Gastrocnemius medialis (tissue), 4 donors: ENCODE measurements at regions of chr11 and their contacts with region 1.

Region 1: GRCh38 chr11:122101625-122102291 is 14.3 kb downstream of the BLID start:
- DNase-seq: peak; percentile 65 to 73
- ATAC-seq: peak; percentile 78 to 86
- H3K4me3 ChIP-seq: peak overlapping the region; percentile 59 to 65 (median 60)
- H3K27ac ChIP-seq: peak overlapping the region; percentile 86 to 92 (median 88)
- H3K4me1 ChIP-seq: peaks cover 6 to 9% of the 10 kb centered on the region in 2 donors
- H3K27me3 ChIP-seq: no peaks in the 10 kb centered on the region
- CTCF ChIP-seq: peak; percentile 46 to 76 (median 62)
- POLR2A ChIP-seq: peak; percentile 22 to 23

Region 2: DNA sequence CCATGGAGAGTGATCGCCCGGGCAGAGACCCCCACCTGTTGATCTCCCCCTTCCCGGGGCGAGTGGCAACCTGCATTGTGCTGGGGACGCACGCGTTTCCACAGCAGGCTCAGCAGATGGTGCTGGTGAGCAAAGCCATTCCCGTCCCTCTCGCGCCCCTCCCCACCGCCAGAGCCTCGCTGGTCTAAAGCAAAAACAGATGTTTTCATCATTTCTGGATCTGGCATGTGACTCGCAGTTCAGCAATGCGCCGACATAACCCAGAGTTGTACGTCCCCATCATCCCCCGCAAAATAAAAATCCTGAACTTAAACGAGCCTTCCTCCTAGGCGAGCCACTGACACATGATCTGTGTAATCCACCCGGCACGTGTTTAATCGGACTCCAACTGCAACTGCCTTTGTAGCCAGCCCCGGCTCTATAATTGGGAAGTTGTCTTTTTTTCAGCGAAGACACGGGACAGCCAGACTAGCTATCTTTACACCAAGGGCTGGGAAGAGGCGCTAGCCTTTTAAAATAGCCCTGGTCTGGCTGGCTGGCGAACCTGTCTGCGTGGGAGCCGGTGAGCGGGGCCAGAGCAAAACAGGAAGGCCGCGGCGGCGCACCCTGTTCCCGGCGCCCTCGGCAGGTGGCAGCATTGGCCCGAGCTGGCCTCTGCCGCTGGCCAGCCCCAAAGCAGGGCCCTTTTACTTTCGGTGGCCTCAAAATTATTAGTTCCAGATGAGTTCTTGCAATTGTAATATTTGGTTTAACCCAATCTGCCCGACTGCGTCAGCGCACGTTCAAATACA is 446.0 kb before region 1 on chr11:
- in situ Hi-C with region 1: loop called in 3 of 4 experiments (anchors 10 to 25 kb)
- intact Hi-C with region 1: loop called (anchors 1 kb)
- DNase-seq: peak; percentile 75 to 80
- ATAC-seq: peak; percentile 89 to 94
- H3K4me3 ChIP-seq: peak overlapping the region; percentile 46 to 71 (median 52)
- H3K27ac ChIP-seq: peak overlapping the region; percentile 86 to 87 (median 86)
- H3K4me1 ChIP-seq: peaks cover 7 to 11% of the 10 kb centered on the region in 2 donors
- H3K27me3 ChIP-seq: no peaks in the 10 kb centered on the region
- CTCF ChIP-seq: peak; percentile 84 to 91 (median 87)
- POLR2A ChIP-seq: no peak

Region 3: GRCh38 chr11:122007601-122008071 is 94.1 kb before region 1 on chr11:
- in situ Hi-C with region 1: no loop called
- intact Hi-C with region 1: no loop called
- DNase-seq: peak; percentile 26 to 49
- ATAC-seq: no peak
- H3K4me3 ChIP-seq: no peak overlapping the region
- H3K27ac ChIP-seq: no peak overlapping the region
- H3K4me1 ChIP-seq: no peaks in the 10 kb centered on the region
- H3K27me3 ChIP-seq: no peaks in the 10 kb centered on the region
- CTCF ChIP-seq: no peak
- POLR2A ChIP-seq: no peak

Region 4: DNA sequence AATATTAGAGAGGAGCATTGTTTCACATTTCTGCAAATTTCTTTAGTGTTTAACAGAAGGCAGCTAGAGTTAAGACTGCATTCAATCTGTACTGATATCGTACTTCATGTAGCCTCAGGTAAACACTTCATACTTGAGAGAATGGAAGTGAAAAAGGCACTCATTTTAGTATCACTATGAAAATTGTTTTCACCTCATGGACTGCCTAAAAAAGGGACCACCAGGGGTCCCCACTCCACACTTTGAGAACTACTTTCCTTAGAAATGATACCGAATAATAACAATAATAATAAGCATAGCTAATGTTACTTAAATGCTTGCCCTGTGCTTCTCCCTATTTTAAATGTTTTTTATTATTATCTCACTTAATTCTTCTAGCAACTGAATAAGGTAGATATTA is 80.9 kb before region 1 on chr11:
- in situ Hi-C with region 1: no loop called
- intact Hi-C with region 1: loop called (anchors 2 kb)
- DNase-seq: no peak
- ATAC-seq: no peak
- H3K4me3 ChIP-seq: no peak overlapping the region
- H3K27ac ChIP-seq: no peak overlapping the region
- H3K4me1 ChIP-seq: no peaks in the 10 kb centered on the region
- H3K27me3 ChIP-seq: no peaks in the 10 kb centered on the region
- CTCF ChIP-seq: peak in 3 of 5 experiments; percentile 10 to 46 (median 26)
- POLR2A ChIP-seq: no peak

Region 5: GRCh38 chr11:122170815-122171475 is 69.2 kb after region 1 on chr11:
- in situ Hi-C with region 1: no loop called
- intact Hi-C with region 1: no loop called
- DNase-seq: no peak
- ATAC-seq: no peak
- H3K4me3 ChIP-seq: no peak overlapping the region
- H3K27ac ChIP-seq: no peak overlapping the region
- H3K4me1 ChIP-seq: peaks cover 0 to 3% of the 10 kb centered on the region in 2 donors
- H3K27me3 ChIP-seq: no peaks in the 10 kb centered on the region
- CTCF ChIP-seq: no peak
- POLR2A ChIP-seq: no peak

Region 6: DNA sequence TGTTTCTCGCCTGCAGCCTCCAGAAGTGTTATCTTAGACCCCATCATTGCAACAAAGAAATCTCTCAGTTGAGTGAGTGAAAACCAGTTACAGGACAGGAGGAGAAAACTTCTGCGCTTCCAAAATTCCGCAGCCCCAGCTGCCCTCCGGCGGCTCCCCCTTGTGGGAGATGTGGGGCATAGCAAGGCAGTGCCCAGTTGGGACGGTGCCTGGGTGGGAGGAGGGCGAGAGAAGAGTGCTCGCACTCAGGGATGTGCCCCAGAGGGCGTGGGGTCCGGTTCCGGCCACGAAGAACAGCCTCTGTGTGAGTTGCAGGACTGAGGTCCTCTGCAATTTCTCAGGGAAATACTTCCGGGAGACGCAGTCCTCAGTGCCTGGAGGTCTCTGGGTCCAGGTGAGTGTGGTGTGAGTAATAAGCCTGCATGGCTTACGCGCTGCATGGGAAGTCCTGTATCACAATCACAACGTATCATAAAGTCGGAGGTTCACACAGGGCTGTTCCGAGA is 101.2 kb after region 1 on chr11:
- in situ Hi-C with region 1: loop called in 2 of 4 experiments (anchors 10 kb)
- intact Hi-C with region 1: loop called (anchors 2 kb)
- DNase-seq: peak; percentile 41 to 63
- ATAC-seq: peak; percentile 87 to 90
- H3K4me3 ChIP-seq: peak overlapping the region; percentile 17 to 35 (median 28)
- H3K27ac ChIP-seq: peak overlapping the region in 1 of 4 donors; percentile 22
- H3K4me1 ChIP-seq: peaks cover 10 to 21% of the 10 kb centered on the region in 2 donors
- H3K27me3 ChIP-seq: no peaks in the 10 kb centered on the region
- CTCF ChIP-seq: peak; percentile 88 to 97 (median 93)
- POLR2A ChIP-seq: no peak

Region 7: DNA sequence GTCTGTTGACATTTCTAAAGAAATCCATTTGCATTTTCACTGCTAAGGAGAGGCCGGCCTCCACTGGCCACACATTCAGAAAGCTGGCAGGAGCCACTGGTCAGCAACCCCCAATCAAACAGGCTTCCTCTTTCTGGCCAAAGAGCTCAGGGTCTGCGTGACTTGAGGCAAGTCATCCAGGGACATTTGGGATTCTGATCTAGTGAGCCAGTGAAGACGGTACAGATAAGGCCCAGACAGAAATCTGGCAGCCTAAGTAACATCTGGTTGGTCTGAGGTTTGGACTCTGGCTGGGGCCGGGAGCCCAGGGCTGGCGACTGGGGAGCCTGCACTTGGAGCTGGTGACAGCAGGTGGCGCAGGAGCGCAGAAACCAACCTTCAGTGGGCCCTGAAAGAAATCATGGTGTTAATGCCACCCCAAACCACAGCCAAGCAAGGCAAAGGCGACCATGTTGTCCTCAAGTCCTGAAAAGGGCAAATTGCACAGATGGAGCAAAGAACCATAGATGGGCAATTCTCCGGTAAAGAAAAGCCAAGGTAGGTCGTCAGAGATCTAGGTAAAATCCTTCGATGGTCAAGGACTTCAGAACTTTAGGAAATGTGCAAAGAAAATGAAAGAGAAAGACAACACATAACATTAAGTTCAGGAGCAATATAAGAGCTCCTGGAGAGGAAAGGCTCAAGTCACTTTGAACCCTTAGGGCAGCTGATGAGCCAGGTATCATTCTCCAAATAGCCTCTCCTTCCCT is 113.7 kb after region 1 on chr11:
- in situ Hi-C with region 1: no loop called
- intact Hi-C with region 1: no loop called
- DNase-seq: peak; percentile 57 to 76
- ATAC-seq: peak; percentile 88 to 94
- H3K4me3 ChIP-seq: no peak overlapping the region
- H3K27ac ChIP-seq: peak overlapping the region; percentile 48 to 65 (median 60)
- H3K4me1 ChIP-seq: peaks cover 8 to 25% of the 10 kb centered on the region in 2 donors
- H3K27me3 ChIP-seq: no peaks in the 10 kb centered on the region
- CTCF ChIP-seq: peak; percentile 91 to 97 (median 93)
- POLR2A ChIP-seq: no peak